Common myeloid progenitor, CD34-positive (primary cell): ENCODE measurements at regions of chr17 and their contacts with region 1.

Region 1: GRCh38 chr17:1365445-1366039 is 34.5 kb downstream of the YWHAE start:
- DNase-seq: peak; percentile 84 to 92 (median 89)
- H3K4me3 ChIP-seq: no peak overlapping the region
- H3K27ac ChIP-seq: peak overlapping the region in 1 of 2 experiments; percentile 25
- H3K4me1 ChIP-seq: peaks cover 13 to 44% (median 34%) of the 10 kb centered on the region in 4 experiments
- H3K27me3 ChIP-seq: no peaks in the 10 kb centered on the region

Region 2: GRCh38 chr17:1227917-1228780 is 137.4 kb before region 1 on chr17:
- CTCF ChIA-PET with region 1: no interaction called
- POLR2A ChIA-PET with region 1: no interaction called
- DNase-seq: peak; percentile 17 to 55 (median 36)
- H3K4me3 ChIP-seq: peak overlapping the region in 6 of 7 experiments; percentile 8 to 76 (median 69)
- H3K27ac ChIP-seq: no peak overlapping the region
- H3K4me1 ChIP-seq: peaks cover 0 to 29% (median 27%) of the 10 kb centered on the region in 4 experiments
- H3K27me3 ChIP-seq: peaks cover 0 to 36% (median 8%) of the 10 kb centered on the region in 5 experiments

Region 3: GRCh38 chr17:1351971-1352370 is 13.6 kb before region 1 on chr17:
- CTCF ChIA-PET with region 1: interaction called, 16 read pairs
- POLR2A ChIA-PET with region 1: no interaction called
- DNase-seq: no peak
- H3K4me3 ChIP-seq: no peak overlapping the region
- H3K27ac ChIP-seq: no peak overlapping the region
- H3K4me1 ChIP-seq: no peaks in the 10 kb centered on the region
- H3K27me3 ChIP-seq: no peaks in the 10 kb centered on the region

Region 4: GRCh38 chr17:1379930-1380313 is 14.4 kb after region 1 on chr17:
- CTCF ChIA-PET with region 1: interaction called, 18 read pairs
- POLR2A ChIA-PET with region 1: interaction called, 4 read pairs
- DNase-seq: no peak
- H3K4me3 ChIP-seq: no peak overlapping the region
- H3K27ac ChIP-seq: no peak overlapping the region
- H3K4me1 ChIP-seq: peaks cover 0 to 17% (median 6%) of the 10 kb centered on the region in 4 experiments
- H3K27me3 ChIP-seq: no peaks in the 10 kb centered on the region

Region 5: DNA sequence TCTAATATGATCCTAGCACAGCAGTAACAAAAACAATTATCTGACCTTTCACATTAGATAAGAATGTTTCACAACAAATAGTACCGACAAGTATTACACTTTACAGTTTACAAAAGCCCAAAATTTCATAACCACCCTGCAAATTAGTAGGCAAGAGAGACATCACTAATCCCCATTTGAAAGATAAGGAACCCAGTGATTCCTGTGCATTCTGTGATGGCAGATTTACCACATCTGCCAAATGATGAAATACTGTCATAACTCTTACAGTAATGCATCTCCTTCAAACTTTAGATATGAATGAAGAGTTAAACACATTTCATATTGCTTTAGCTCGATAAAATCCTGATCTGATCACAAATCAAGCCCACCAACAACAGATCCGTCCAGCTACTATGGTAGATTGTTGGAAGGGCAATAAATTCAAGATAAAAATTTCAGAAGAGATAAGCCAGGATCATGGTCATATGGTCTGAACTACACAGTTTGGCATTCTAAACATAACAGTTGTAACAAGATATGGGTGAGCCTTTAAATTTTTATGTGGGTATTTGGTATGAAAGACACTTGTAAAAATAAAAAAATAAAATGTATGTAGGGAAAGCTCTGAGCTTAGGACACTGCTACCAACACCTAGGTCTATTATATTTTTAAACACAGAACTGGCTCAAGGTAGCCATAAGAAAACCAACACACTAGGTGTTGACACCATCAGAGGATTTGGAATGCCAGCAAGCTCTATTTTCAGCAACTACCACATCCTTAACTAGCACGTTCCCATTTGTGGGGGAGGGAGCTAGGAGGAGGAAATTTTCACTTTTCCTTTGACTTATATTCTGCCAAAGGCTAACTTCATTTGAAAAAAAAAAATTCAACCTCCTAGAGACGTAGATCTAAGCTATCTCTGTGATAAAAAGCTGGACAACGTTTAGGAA is 25.2 kb after region 1 on chr17:
- CTCF ChIA-PET with region 1: interaction called, 16 read pairs
- POLR2A ChIA-PET with region 1: no interaction called
- DNase-seq: peak in 2 of 3 donors; percentile 27 to 31
- H3K4me3 ChIP-seq: peak overlapping the region in 1 of 7 experiments; percentile 28
- H3K27ac ChIP-seq: peak overlapping the region; percentile 11 to 41
- H3K4me1 ChIP-seq: peaks cover 9 to 31% (median 13%) of the 10 kb centered on the region in 4 experiments
- H3K27me3 ChIP-seq: no peaks in the 10 kb centered on the region

Region 6: DNA sequence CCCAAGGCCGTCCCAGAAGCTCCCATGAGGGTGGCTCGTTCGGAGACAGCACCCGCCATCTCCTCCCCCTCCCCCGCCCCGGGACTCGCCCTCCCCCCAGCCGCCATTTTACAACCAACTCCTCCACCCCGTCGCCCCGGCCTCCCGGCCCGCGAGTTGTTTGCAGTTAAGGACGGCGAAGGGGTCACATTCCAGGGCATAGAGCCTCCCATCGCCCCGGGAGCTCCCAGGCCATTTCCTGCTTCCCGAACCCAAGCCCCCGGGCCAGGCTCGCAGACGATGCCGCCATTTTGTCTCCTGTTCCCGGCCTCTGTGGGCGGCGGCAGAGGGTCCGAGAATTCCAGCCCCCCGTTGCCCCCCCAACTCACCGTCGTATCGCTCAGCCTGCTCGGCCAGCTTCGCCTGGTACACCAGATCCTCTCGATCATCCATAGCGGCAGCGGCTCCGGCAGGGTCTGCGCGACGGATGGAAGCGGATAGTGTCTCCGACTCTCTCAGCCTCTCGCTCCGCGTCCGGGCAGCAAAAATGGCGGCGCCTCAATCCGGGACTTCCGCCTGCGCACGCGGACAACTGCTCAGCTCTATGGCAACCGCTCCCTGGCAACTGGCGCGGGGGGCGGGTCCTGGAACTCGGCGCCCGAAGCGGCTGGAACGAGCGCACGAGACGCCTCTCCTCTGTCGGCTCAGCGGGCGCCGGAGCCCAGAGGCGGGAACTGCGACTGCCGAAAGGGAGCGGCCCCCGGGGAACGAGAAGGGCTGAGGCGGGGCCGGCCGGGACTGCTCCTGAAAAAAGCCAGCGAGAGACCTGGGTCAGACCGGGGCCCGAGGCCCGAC is 34.4 kb after region 1 on chr17 and contains the start of gene YWHAE:
- CTCF ChIA-PET with region 1: interaction called, 10 read pairs
- POLR2A ChIA-PET with region 1: interaction called, 13 read pairs
- DNase-seq: peak; percentile 92 to 96 (median 94)
- H3K4me3 ChIP-seq: peak within 1 kb of the TSS; percentile 92 to 99 (median 96)
- H3K27ac ChIP-seq: peak within 1 kb of the TSS; percentile 95 to 99
- H3K4me1 ChIP-seq: peaks cover 16 to 25% (median 20%) of the 10 kb centered on the region in 4 experiments
- H3K27me3 ChIP-seq: no peaks in the 10 kb centered on the region

Region 7: GRCh38 chr17:1416414-1416813 is 50.9 kb after region 1 on chr17:
- CTCF ChIA-PET with region 1: no interaction called
- POLR2A ChIA-PET with region 1: no interaction called
- DNase-seq: no peak
- H3K4me3 ChIP-seq: no peak overlapping the region
- H3K27ac ChIP-seq: no peak overlapping the region
- H3K4me1 ChIP-seq: peaks cover 0 to 3% (median under 1%) of the 10 kb centered on the region in 4 experiments
- H3K27me3 ChIP-seq: no peaks in the 10 kb centered on the region

Region 8: DNA sequence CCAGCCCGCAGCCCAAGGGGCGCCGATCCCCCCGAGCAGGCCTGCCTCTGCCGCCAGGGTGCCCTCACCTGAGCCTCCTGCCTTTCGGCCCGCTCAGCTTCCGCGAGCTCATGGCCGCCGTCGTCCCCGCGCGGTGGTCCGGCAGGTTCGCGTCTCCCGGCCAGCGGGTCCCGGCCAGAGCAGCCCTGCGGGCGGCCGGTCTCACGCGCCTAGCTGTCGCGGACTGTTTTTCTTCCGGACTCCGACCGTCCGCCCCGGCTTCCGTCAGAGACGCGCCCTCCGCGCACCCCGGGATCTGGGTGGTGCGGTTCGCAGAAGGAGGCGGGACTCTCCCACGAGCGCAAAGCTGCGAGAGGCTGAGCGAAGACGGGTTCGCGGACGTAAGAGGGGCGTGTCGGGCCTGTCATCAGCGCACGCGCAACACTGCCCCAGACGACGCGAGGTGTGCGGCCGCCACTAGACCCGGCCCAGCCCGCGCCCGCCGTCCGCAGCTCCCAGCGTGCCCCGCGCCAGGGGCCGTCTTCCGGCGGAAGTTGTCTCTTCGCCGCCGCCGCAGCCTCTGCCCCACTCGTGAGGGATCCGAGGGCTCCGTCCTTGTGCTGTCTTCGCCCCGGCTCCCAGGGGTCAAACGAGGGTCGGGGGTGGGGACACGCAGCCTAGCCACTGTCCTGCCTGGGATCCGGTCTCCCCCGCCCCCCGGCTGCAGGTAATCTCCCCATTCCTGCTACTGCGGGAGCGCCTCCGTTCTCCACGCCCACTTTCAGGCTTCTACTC is 151.0 kb after region 1 on chr17 and contains the start of gene INPP5K:
- CTCF ChIA-PET with region 1: interaction called, 83 read pairs
- POLR2A ChIA-PET with region 1: interaction called, 9 read pairs
- DNase-seq: peak; percentile 98 to 99 (median 99)
- H3K4me3 ChIP-seq: peak within 1 kb of the TSS; percentile 89 to 99 (median 94)
- H3K27ac ChIP-seq: peak within 1 kb of the TSS; percentile 84 to 90
- H3K4me1 ChIP-seq: peaks cover 7 to 19% (median 18%) of the 10 kb centered on the region in 4 experiments
- H3K27me3 ChIP-seq: no peaks in the 10 kb centered on the region

Region 9: GRCh38 chr17:1532836-1533602 is 167.5 kb after region 1 on chr17:
- CTCF ChIA-PET with region 1: interaction called, 11 read pairs
- POLR2A ChIA-PET with region 1: interaction called, 3 read pairs
- DNase-seq: peak; percentile 54 to 72 (median 70)
- H3K4me3 ChIP-seq: no peak overlapping the region
- H3K27ac ChIP-seq: no peak overlapping the region
- H3K4me1 ChIP-seq: no peaks in the 10 kb centered on the region
- H3K27me3 ChIP-seq: no peaks in the 10 kb centered on the region